ENCODE measurements at regions of chr9 and their contacts with region 1.

Region 1: DNA sequence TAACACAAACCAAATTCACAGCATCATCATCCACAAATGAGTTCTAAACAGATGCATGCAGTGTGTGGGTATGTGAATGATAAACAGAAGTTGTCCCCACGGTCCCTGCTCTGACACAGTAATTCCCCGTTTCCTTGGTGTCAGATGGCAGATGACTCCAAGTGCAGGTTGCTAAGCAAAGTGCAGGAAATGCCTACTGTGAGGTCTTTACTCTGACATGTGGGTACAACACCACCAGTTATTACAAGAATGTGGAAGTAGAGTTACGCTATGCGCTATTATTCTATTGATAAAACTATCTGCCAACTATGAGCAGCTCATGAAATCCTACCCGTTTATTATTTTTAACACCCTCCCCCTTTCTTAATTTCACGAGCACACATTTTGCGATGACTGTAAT is 448.9 kb downstream of the BNC2 start:
- DNase-seq: no peak
- ATAC-seq: no peak
- H3K4me3 Mint-ChIP-seq: no peak overlapping the region
- H3K27ac Mint-ChIP-seq: no peak overlapping the region
- H3K4me1 Mint-ChIP-seq: no peaks in the 10 kb centered on the region
- H3K27me3 Mint-ChIP-seq: no peaks in the 10 kb centered on the region
- CTCF ChIP-seq: no peak

Region 2: GRCh38 chr9:16272776-16273175 is 148.8 kb before region 1 on chr9:
- CTCF ChIA-PET with region 1: no interaction called
- POLR2A ChIA-PET with region 1: no interaction called
- intact Hi-C with region 1: loop called (anchors 5 kb)
- DNase-seq: no peak
- ATAC-seq: no peak
- H3K4me3 Mint-ChIP-seq: no peak overlapping the region
- H3K27ac Mint-ChIP-seq: no peak overlapping the region
- H3K4me1 Mint-ChIP-seq: no peaks in the 10 kb centered on the region
- H3K27me3 Mint-ChIP-seq: no peaks in the 10 kb centered on the region
- CTCF ChIP-seq: no peak

Region 3: GRCh38 chr9:16344343-16344742 is 77.2 kb before region 1 on chr9:
- CTCF ChIA-PET with region 1: no interaction called
- POLR2A ChIA-PET with region 1: no interaction called
- intact Hi-C with region 1: no loop called
- DNase-seq: no peak
- ATAC-seq: no peak
- H3K4me3 Mint-ChIP-seq: no peak overlapping the region
- H3K27ac Mint-ChIP-seq: no peak overlapping the region
- H3K4me1 Mint-ChIP-seq: no peaks in the 10 kb centered on the region
- H3K27me3 Mint-ChIP-seq: no peaks in the 10 kb centered on the region
- CTCF ChIP-seq: no peak

Measured in activated B cell treated with CpG ODN at 0.5 μM for 24 hours (primary cell).